H1 (cell line): ENCODE measurements at regions of chr5 and their contacts with region 1.

Region 1: GRCh38 chr5:150167908-150168307 is 1.3 kb downstream of the CDX1 start:
- DNase-seq: no peak
- H3K4me3 ChIP-seq: no peak overlapping the region
- H3K27ac ChIP-seq: no peak overlapping the region
- H3K4me1 ChIP-seq: peaks cover 4 to 9% (median 7%) of the 10 kb centered on the region in 4 experiments
- H3K27me3 ChIP-seq: peaks cover 58 to 81% (median 74%) of the 10 kb centered on the region in 4 experiments
- CTCF ChIP-seq: peak in 2 of 3 experiments; percentile 55 to 71; a peak in 3 of 4 replicates
- EP300 ChIP-seq: no peak
- POLR2A ChIP-seq: no peak
- RAD21 ChIP-seq: peak in 1 of 2 experiments; percentile 26; a peak in 1 of 4 replicates

Region 2: DNA sequence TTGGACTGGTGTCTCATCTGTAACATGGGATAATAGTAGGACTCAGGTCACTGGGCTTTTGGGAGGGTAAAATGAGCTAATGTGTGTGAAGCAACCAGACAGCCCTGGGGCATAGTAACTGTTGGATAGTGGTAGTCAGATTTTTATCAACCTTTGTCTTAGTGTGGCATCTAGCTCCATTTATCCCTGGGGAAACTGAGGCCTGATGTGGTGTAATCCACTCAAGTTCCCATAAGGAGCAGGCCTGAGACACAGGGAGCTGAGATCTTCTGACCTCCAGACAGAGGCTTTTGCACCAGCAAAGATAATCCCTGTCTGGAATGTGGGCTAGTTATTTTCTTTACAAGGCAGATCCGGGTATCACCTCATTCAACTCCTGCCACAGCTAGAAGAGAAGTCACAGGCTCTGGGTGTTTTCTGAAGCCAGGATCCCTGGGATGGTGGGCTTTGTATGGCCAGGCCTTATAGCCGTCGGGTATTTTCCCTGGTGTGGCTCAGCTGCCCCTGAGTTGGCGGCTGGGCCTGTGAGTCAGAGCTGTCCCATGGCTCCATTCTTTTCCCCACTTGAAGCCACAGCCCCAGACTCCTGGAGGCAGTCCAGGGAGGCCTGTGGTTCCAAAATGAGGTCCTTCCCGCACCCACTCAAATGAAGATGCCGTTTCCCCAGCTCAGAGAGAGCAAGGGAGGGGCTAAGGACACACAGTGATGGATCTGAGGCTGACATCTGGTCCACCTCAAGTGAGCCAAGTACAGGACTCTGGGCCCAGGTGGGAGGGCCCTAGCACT is 55.5 kb before region 1 on chr5:
- CTCF ChIA-PET with region 1: interaction called, 11 read pairs
- POLR2A ChIA-PET with region 1: no interaction called
- DNase-seq: peak in 1 of 2 experiments; percentile 41
- H3K4me3 ChIP-seq: no peak overlapping the region
- H3K27ac ChIP-seq: no peak overlapping the region
- H3K4me1 ChIP-seq: peaks cover 0 to 10% (median 2%) of the 10 kb centered on the region in 4 experiments; a peak in 3 of 7 replicates
- H3K27me3 ChIP-seq: no peaks in the 10 kb centered on the region
- CTCF ChIP-seq: no peak
- EP300 ChIP-seq: no peak
- POLR2A ChIP-seq: no peak
- RAD21 ChIP-seq: no peak

Region 3: GRCh38 chr5:150180241-150181026 is 12.5 kb after region 1 on chr5:
- CTCF ChIA-PET with region 1: interaction called, 268 read pairs
- POLR2A ChIA-PET with region 1: no interaction called
- DNase-seq: no peak
- H3K4me3 ChIP-seq: no peak overlapping the region
- H3K27ac ChIP-seq: no peak overlapping the region
- H3K4me1 ChIP-seq: peaks cover 0 to 3% (median under 1%) of the 10 kb centered on the region in 4 experiments; a peak in 3 of 7 replicates
- H3K27me3 ChIP-seq: peaks cover 0 to 9% (median 2%) of the 10 kb centered on the region in 4 experiments; a peak in 4 of 7 replicates
- CTCF ChIP-seq: no peak
- EP300 ChIP-seq: no peak
- POLR2A ChIP-seq: no peak
- RAD21 ChIP-seq: no peak

Region 4: DNA sequence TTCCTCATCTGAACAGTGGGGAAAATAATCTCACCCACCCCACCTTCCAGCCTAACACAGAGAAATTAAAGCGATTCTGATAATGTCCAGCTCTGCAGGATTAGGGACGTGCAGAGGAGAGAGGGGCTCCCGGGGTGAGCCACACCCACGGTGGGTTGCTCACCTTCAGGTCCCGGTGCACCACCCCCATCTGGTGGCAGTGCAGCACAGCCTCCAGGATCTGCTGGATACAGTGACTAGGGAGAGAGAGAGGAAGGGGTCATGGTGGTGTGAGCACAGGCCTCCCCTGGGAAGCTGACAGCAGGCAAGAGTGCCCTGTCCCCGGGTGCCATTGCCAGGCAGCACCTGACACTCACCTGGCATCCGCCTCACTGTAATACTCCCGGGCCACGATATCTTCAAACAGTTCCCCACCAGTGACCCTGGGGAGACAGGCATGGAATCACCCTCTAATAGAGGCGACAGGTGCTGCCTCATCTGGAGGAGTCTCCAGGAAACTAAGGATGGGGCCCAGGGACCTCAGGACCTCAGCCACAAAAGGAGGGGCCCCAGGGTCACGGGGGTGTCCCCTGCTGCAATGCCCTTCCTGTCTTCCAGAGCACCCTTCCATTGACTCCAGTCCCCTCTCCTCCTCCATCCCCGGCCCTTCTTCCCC is 88.6 kb after region 1 on chr5:
- CTCF ChIA-PET with region 1: interaction called, 20 read pairs
- POLR2A ChIA-PET with region 1: no interaction called
- DNase-seq: peak in 1 of 2 experiments; percentile 64
- H3K4me3 ChIP-seq: no peak overlapping the region
- H3K27ac ChIP-seq: no peak overlapping the region
- H3K4me1 ChIP-seq: peaks cover 0 to 3% (median 1%) of the 10 kb centered on the region in 4 experiments; a peak in 3 of 7 replicates
- H3K27me3 ChIP-seq: no peaks in the 10 kb centered on the region; a peak in 2 of 7 replicates
- CTCF ChIP-seq: peak; percentile 72 to 82 (median 75)
- EP300 ChIP-seq: no peak
- POLR2A ChIP-seq: no peak
- RAD21 ChIP-seq: peak; percentile 72 to 82